ENCODE measurements at regions of chr10 and their contacts with region 1.

Region 1: DNA sequence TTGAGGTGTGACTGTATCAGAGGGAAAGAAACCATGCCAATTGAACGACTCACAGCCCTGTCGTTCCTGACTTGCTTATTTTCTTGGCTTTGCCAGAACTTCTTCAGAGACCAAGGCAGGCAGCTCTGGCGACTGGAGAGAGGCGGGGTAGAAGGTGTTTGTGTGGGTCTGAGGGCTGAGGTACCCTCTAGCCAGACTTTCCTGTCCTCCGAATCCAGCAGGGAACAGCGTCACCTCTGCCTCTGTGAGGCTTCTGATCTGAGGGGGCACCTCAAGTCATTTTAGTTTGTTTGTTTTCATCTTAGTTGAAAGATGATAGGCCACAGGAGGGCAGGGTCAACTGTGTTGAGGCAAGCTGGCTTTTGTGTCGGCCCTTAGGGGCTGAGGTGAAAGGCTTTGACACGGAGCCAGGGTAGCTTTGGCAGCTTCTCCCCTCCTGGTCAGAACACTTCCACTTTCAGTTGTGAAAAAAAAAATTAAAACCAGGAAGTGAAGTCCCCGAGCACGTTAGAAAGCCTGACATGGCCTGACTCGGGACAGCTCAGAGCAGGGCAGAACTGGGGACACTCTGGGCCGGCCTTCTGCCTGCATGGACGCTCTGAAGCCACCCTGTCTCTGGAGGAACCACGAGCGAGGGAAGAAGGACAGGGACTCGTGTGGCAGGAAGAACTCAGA is 1.9 kb downstream of the ACSL5 start:
- DNase-seq: peak; percentile 56
- ATAC-seq: peak; percentile 40
- H3K4me3 ChIP-seq: peak overlapping the region; percentile 69 to 72 (median 72)
- H3K27ac ChIP-seq: peak overlapping the region; percentile 80
- H3K4me1 ChIP-seq: peaks cover 85% of the 10 kb centered on the region
- H3K27me3 ChIP-seq: no peaks in the 10 kb centered on the region; a peak in 1 of 5 replicates
- CTCF ChIP-seq: 0 out of 2 replicates have a peak, but pooled peaks have one; percentile 14
- EP300 ChIP-seq: no peak
- POLR2A ChIP-seq: no peak
- RAD21 ChIP-seq: 0 out of 2 replicates have a peak, but pooled peaks have one; percentile 11

Region 2: GRCh38 chr10:112295853-112296830 is 79.7 kb before region 1 on chr10:
- CTCF ChIA-PET with region 1: no interaction called
- POLR2A ChIA-PET with region 1: no interaction called
- in situ Hi-C with region 1: no loop called
- intact Hi-C with region 1: no loop called
- DNase-seq: peak; percentile 76
- ATAC-seq: peak; percentile 77
- H3K4me3 ChIP-seq: peak overlapping the region; percentile 32 to 43 (median 41)
- H3K27ac ChIP-seq: peak overlapping the region; percentile 77
- H3K4me1 ChIP-seq: peaks cover 94% of the 10 kb centered on the region
- H3K27me3 ChIP-seq: no peaks in the 10 kb centered on the region
- CTCF ChIP-seq: no peak
- EP300 ChIP-seq: peak in 1 of 2 experiments; percentile 79; a peak in 2 of 4 replicates
- POLR2A ChIP-seq: peak in 1 of 2 experiments; percentile 15; a peak in 2 of 4 replicates
- RAD21 ChIP-seq: no peak

Region 3: GRCh38 chr10:112332509-112333228 is 43.2 kb before region 1 on chr10:
- CTCF ChIA-PET with region 1: no interaction called
- POLR2A ChIA-PET with region 1: interaction called, 4 read pairs
- in situ Hi-C with region 1: no loop called
- intact Hi-C with region 1: loop called (anchors 5 kb)
- DNase-seq: peak; percentile 80
- ATAC-seq: peak; percentile 60
- H3K4me3 ChIP-seq: 0 out of 6 replicates have a peak overlapping the region, but pooled peaks of 1 of the 3 experiments have one; percentile 29
- H3K27ac ChIP-seq: no peak overlapping the region
- H3K4me1 ChIP-seq: peaks cover 60% of the 10 kb centered on the region
- H3K27me3 ChIP-seq: no peaks in the 10 kb centered on the region
- CTCF ChIP-seq: no peak
- EP300 ChIP-seq: peak in 1 of 2 experiments; percentile 81; a peak in 1 of 4 replicates
- POLR2A ChIP-seq: no peak
- RAD21 ChIP-seq: no peak

Region 4: GRCh38 chr10:112361951-112362751 is 13.7 kb before region 1 on chr10:
- CTCF ChIA-PET with region 1: no interaction called
- POLR2A ChIA-PET with region 1: interaction called, 55 read pairs
- in situ Hi-C with region 1: no loop called
- intact Hi-C with region 1: no loop called
- DNase-seq: no peak
- ATAC-seq: no peak
- H3K4me3 ChIP-seq: no peak overlapping the region
- H3K27ac ChIP-seq: no peak overlapping the region
- H3K4me1 ChIP-seq: peaks cover 78% of the 10 kb centered on the region
- H3K27me3 ChIP-seq: no peaks in the 10 kb centered on the region
- CTCF ChIP-seq: no peak
- EP300 ChIP-seq: no peak
- POLR2A ChIP-seq: no peak
- RAD21 ChIP-seq: no peak

Region 5: DNA sequence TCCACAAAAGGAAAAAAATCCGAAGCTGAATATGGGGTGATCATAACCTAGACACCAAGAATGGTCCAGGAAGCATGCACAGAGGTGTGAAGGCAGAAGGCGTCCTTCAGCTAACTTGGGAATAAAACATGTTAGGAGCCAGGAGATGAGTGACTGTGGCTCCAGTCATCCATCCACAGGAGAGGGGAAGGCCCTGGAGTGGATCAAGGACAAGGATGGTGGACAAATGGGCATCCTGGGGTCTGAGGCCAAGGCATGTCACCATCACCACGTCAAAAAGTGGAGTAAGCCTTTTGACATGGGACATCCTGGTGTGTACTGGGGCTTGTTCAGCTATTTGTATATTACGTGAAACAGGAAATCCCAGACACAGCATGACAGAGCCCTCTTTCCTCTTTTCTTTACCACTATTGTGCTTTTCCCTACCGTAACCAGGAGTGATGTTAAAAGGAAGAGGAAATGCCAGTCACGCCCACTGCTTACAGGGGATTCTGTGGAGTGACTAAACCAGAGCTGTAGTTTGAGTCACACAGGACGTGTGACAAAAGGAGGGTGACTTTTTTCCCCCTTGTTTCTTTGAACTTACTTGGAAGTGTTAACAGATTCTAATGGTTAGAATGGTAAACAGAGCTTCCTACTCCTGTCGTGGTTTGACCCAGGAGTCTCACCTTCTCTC is 13.4 kb after region 1 on chr10:
- CTCF ChIA-PET with region 1: no interaction called
- POLR2A ChIA-PET with region 1: interaction called, 72 read pairs
- in situ Hi-C with region 1: no loop called
- intact Hi-C with region 1: loop called (anchors 2 kb)
- DNase-seq: peak; percentile 85
- ATAC-seq: peak; percentile 45
- H3K4me3 ChIP-seq: no peak overlapping the region; a peak in 1 of 6 replicates
- H3K27ac ChIP-seq: peak overlapping the region; percentile 58
- H3K4me1 ChIP-seq: peaks cover 100% of the 10 kb centered on the region
- H3K27me3 ChIP-seq: no peaks in the 10 kb centered on the region
- CTCF ChIP-seq: no peak
- EP300 ChIP-seq: peak in 1 of 2 experiments; percentile 83; a peak in 2 of 4 replicates
- POLR2A ChIP-seq: no peak
- RAD21 ChIP-seq: no peak

Region 6: GRCh38 chr10:112394475-112394875 is 18.6 kb after region 1 on chr10:
- CTCF ChIA-PET with region 1: no interaction called
- POLR2A ChIA-PET with region 1: interaction called, 72 read pairs
- in situ Hi-C with region 1: no loop called
- intact Hi-C with region 1: loop called (anchors 2 kb)
- DNase-seq: peak; percentile 99
- ATAC-seq: peak; percentile 97
- H3K4me3 ChIP-seq: peak overlapping the region in 1 of 3 experiments; percentile 34; a peak in 1 of 6 replicates
- H3K27ac ChIP-seq: peak overlapping the region; percentile 83
- H3K4me1 ChIP-seq: peaks cover 71% of the 10 kb centered on the region
- H3K27me3 ChIP-seq: no peaks in the 10 kb centered on the region
- CTCF ChIP-seq: no peak
- EP300 ChIP-seq: peak; percentile 15 to 96; a peak in 2 of 4 replicates
- POLR2A ChIP-seq: 0 out of 4 replicates have a peak, but pooled peaks of 1 of the 2 experiments have one; percentile 39
- RAD21 ChIP-seq: peak; percentile 41; the same call in 1 of the 2 replicates

Measured in HepG2 (cell line).